ENCODE measurements at regions of chr4 and their contacts with region 1.

Region 1: DNA sequence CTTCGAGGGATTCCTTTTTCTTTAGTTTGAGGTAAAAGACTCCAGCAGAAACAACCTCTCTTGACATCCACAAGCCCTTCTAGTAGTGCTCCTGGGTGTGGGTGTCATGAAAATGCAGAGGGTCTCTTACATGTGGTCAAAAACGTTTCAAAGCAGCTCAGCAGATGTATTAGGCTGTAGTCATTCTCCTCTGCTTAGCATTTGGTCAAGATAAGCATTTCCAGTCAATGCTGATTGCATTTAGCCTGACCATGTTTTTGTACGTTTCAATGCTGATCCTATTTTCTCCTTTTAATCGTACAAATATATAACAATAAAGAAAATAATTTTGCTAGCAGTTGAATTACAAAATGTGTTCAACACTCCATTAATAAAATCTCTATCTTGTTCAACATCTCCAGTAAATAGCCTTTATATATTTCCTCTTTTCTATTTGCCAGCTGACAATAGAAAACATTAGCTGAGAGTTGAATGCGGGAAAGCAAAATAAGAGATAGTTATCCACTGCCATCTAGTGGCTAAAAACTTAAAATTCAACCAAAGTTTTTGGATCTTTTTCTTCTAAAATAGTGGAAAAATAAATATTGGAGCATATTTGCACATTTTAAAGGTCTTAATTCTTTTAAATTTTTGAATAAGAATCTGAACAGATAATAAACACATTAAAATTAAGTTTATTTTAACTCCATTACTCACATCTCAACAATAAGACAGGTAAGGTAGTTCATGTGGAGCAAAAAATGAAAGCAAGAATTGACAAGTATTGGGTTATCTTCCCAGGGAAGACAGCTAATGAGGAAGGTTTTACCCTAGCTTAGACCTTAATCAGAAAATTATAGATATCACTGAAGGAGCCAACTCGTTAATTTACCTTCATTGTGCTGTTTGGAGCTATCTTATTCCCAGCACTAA is 15.2 kb upstream of the PACRGL start:
- DNase-seq: no peak

Region 2: GRCh38 chr4:18689308-18690115 is 1995.6 kb before region 1 on chr4:
- intact Hi-C with region 1: loop called (anchors 5 kb)
- DNase-seq: peak in 5 of 10 donors; percentile 37 to 65 (median 59)

Region 3: DNA sequence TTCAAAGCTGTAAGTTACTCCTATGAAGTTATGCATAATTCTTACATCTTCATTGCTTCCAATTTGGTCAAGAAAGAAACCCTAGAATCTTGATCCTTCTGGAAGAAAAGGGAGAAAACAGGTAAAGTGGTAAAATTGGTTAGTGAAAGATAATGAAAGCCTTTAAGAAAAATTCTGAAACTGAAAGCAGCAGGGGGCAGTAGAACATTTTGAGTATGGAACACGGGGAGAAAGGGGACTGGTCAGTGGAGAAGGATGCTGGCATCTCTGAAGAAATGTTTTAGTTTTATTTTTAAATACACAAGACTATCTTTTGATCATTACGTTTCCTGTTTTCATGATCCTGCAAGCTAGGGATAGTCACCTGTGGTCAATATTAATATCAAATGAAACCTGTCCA is 379.1 kb before region 1 on chr4:
- intact Hi-C with region 1: loop called (anchors 5 kb)
- DNase-seq: peak in 1 of 10 donors; percentile 40

Region 4: DNA sequence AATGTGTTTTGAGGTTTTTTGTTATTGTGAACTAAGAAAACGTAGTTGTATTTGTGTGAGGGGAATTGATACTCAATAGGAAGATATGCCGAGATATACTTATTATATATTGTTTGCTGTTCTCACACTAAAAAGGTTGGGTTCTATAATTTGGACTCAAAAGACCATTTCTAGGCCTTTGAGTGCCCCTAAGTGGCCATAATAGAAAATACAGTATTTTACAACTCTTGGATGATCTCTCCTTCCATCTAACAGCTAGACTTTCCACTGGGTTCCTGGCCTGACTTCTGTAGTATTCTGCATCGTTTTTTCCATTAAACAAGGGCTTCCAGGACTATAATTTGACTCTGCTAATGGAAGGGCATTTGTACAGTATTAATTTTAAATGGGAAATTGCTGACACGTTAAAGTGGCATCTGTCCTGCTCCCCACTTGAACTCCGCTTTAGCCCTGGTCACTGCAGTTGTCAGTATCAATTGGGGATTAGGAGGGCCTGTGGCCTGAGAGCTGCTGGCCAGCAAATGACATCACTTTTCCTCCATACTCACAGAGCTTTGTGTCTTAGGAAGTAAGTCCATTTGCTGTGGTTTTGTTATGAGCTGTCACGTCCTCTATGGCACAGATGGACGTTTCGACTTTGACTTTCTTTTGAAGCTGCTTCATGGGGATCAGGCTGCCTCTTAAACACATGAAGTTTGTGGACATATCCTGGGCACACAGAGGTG is 256.5 kb before region 1 on chr4:
- intact Hi-C with region 1: loop called (anchors 5 kb)
- DNase-seq: no peak

Region 5: DNA sequence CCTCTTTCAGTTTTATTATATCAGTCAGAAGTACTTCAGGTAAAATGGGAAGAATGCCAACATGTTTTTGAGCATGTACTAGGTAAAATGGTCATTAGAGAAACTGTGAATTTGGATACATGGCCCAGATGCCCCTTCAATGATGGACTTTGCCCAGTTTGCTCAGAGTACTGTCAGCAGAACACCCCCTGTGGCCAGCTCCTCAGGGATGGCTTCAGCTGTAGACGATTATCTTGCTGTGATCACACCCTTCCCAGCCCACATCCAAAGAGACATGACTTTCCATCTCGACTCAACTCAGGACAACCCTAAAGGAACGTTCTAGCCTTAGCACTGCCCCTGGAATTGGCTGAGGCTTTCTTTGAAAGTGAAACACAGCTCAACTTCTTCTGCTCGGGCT is 454.2 kb after region 1 on chr4:
- intact Hi-C with region 1: no loop called
- DNase-seq: no peak

Measured in posterior cingulate gyrus (tissue), 11 donors.